Mammary epithelial cell (primary cell): ENCODE measurements at regions of chr22 and their contacts with region 1.

Region 1: DNA sequence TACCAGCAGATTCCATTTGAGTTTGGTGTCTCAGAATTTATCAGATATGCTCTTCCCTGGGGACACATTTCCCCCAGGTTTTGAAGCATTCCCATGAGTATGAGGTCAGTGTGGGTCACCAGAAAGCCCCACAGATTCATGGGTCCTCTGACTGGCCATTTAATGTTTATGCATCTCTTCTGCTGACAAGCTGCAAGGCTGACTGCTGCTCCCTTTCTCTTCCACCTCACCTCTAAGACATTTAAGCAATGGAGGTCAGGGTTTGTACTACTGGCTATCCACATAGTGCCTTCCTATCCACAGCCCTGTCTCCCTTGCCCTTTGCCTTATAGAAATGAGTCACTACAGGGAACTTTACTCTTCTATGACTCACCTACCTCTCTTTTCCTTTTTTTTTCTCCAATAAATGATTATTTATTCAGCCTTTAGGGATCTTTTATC is 106.0 kb upstream of the TIMP3 start:
- DNase-seq: peak; percentile 69
- H3K4me3 ChIP-seq: no peak overlapping the region
- H3K27ac ChIP-seq: peak overlapping the region; percentile 42
- H3K4me1 ChIP-seq: peaks cover 58% of the 10 kb centered on the region
- H3K27me3 ChIP-seq: no peaks in the 10 kb centered on the region
- CTCF ChIP-seq: no peak

Region 2: DNA sequence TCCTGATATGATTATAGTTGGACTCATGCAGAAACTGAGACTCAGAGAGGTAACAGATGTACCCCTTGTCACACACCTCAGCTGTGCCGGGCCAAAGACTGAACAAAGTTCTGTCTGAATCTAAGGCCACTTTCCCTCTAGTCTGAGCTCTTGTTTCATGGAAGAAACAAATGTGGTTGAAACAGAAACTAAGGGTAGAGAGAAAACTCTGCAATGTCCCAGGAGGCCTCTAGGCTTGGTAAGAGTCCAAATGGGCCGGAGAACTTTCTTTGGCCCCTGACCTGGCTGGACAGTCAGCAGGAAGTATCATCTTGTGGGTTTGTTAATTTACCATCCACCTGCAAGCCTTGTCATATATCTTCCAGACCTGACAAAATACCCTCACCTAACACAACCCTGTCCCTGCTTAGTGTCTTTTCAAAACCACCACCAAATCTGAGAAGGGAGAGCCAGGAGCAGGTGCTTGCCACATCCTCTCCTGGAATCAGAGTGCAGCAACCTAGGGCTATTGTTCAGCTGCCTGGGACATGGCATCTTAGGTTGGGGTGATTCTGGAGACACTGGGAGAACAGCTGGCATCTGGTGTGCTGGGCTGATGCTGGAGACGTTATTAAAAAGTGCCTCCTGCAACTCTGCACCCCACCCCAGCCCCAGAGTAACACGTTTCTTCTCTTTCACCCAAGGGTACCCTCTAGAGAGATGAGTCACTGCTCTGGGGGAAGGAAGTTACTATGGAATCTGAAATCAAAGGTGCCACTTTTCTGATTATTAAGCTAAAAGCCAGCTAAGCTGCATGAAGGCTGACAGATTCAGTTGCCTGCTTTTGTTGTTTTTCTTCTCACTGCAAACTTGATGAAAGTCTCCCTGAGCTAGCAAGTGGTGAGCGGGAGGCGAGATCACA is 20.3 kb before region 1 on chr22:
- CTCF ChIA-PET with region 1: no interaction called
- dilution Hi-C with region 1: no loop called
- in situ Hi-C with region 1: no loop called
- intact Hi-C with region 1: no loop called
- DNase-seq: no peak
- H3K4me3 ChIP-seq: no peak overlapping the region
- H3K27ac ChIP-seq: no peak overlapping the region
- H3K4me1 ChIP-seq: no peaks in the 10 kb centered on the region
- H3K27me3 ChIP-seq: no peaks in the 10 kb centered on the region
- CTCF ChIP-seq: no peak

Region 3: DNA sequence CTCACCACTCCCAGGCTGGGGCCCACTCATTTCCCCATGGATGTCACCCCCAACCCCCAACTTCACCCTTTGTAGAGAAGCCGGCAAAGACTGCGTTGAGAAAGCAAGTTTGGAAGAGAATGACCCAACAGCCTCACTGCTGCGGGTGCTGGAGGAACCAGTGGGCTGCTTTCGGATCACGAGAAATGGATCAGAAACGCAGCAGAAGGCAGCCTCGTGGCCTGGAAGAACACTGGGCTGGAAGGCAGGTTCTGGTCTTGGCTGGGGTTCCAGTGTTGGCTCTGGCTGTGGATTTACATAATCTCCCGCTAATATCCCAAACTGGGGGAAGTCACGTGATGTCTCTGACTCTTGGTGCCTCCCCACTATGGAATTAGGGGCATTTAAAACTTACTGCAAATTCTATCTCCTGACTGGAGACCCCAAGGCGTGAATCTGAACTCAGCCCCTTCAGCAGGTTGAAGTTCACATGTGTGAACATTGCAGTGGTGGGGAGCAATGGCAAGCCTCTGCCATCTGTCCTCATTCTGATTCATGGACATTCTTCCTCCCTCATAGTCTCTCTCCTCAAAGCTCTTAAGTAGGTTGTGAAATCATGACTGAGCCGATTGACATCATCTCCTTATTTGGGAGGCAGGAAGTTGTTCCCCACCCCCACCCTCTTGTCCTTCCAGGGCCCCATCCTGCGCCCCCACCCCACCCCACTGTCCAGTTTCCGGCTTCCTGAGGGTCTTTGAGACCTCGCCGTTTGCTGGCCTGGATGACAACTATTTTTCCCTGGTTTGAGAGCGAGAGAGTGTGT is 69.1 kb after region 1 on chr22:
- CTCF ChIA-PET with region 1: no interaction called
- dilution Hi-C with region 1: no loop called
- in situ Hi-C with region 1: no loop called
- intact Hi-C with region 1: loop called (anchors 5 kb)
- DNase-seq: peak; percentile 60
- H3K4me3 ChIP-seq: no peak overlapping the region
- H3K27ac ChIP-seq: no peak overlapping the region
- H3K4me1 ChIP-seq: peaks cover 3% of the 10 kb centered on the region
- H3K27me3 ChIP-seq: no peaks in the 10 kb centered on the region
- CTCF ChIP-seq: no peak